CD4-positive, alpha-beta T cell (primary cell): ENCODE measurements at regions of chr14 and their contacts with region 1.

Region 1: GRCh38 chr14:98173305-98173704 is 1098.7 kb downstream of the BCL11B start:
- DNase-seq: peak; percentile 34 to 94 (median 74)
- ATAC-seq: peak; percentile 70
- H3K4me3 ChIP-seq: peak overlapping the region; percentile 33
- H3K4me3 Mint-ChIP-seq: peak overlapping the region; percentile 83
- H3K27ac ChIP-seq: peak overlapping the region; percentile 78 to 80
- H3K27ac Mint-ChIP-seq: peak overlapping the region; percentile 93
- H3K4me1 ChIP-seq: peaks cover 92% of the 10 kb centered on the region
- H3K4me1 Mint-ChIP-seq: peaks cover 100% of the 10 kb centered on the region
- H3K27me3 ChIP-seq: no peaks in the 10 kb centered on the region
- H3K27me3 Mint-ChIP-seq: no peaks in the 10 kb centered on the region
- CTCF ChIP-seq: no peak

Region 2: GRCh38 chr14:97820781-97821180 is 352.5 kb before region 1 on chr14:
- CTCF ChIA-PET with region 1: no interaction called
- POLR2A ChIA-PET with region 1: no interaction called
- intact Hi-C with region 1: no loop called
- DNase-seq: no peak
- ATAC-seq: no peak
- H3K4me3 ChIP-seq: no peak overlapping the region
- H3K4me3 Mint-ChIP-seq: no peak overlapping the region
- H3K27ac ChIP-seq: no peak overlapping the region
- H3K27ac Mint-ChIP-seq: no peak overlapping the region
- H3K4me1 ChIP-seq: no peaks in the 10 kb centered on the region
- H3K4me1 Mint-ChIP-seq: no peaks in the 10 kb centered on the region
- H3K27me3 ChIP-seq: no peaks in the 10 kb centered on the region
- H3K27me3 Mint-ChIP-seq: no peaks in the 10 kb centered on the region
- CTCF ChIP-seq: no peak

Region 3: DNA sequence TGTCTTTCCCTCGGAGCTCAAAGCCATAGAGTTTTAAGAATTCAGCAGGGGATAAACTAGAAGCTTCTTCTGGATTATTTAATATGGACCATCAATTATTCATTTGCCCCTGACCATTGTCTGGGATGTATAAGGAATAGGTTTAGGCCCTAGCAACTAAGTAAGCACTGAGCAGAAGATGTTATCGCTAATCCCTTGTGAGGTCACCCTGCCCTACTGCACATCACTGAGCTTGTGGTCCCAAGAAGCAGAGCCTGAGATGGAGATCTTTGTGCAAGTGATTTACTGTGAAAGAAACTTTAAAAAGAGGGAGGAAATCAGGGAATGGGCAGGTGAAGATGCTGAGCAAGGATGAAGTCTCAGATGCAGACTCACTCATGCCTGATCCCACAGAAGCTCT is 43.6 kb before region 1 on chr14:
- CTCF ChIA-PET with region 1: no interaction called
- POLR2A ChIA-PET with region 1: no interaction called
- intact Hi-C with region 1: no loop called
- DNase-seq: no peak
- ATAC-seq: no peak
- H3K4me3 ChIP-seq: no peak overlapping the region
- H3K4me3 Mint-ChIP-seq: no peak overlapping the region
- H3K27ac ChIP-seq: no peak overlapping the region
- H3K27ac Mint-ChIP-seq: no peak overlapping the region
- H3K4me1 ChIP-seq: peaks cover 3% of the 10 kb centered on the region
- H3K4me1 Mint-ChIP-seq: peaks cover 32% of the 10 kb centered on the region
- H3K27me3 ChIP-seq: no peaks in the 10 kb centered on the region
- H3K27me3 Mint-ChIP-seq: no peaks in the 10 kb centered on the region
- CTCF ChIP-seq: no peak

Region 4: DNA sequence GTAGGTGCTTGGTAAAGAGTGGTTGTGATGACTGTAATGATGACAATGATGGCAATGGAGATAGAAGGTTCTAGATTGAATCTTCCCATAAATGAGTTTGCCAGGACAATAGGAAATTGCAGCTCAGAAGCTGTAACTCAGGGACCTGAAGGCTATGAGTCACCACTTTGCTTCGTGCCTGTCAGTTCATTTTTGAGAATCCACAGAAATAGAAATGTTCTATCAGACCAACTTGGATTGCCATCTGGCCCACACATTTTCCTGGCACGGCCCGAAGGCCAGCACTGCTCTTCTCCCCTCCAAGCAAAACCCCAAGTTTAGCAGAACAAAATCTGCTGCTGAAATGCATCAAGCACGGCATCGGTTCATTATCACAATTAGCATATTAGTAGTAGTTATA is 28.3 kb before region 1 on chr14:
- CTCF ChIA-PET with region 1: interaction called, 4 read pairs
- POLR2A ChIA-PET with region 1: interaction called, 183 read pairs
- intact Hi-C with region 1: loop called (anchors 2 to 5 kb)
- DNase-seq: no peak
- ATAC-seq: no peak
- H3K4me3 ChIP-seq: no peak overlapping the region
- H3K4me3 Mint-ChIP-seq: no peak overlapping the region
- H3K27ac ChIP-seq: no peak overlapping the region
- H3K27ac Mint-ChIP-seq: peak overlapping the region; percentile 43
- H3K4me1 ChIP-seq: peaks cover 25% of the 10 kb centered on the region
- H3K4me1 Mint-ChIP-seq: peaks cover 64% of the 10 kb centered on the region
- H3K27me3 ChIP-seq: no peaks in the 10 kb centered on the region
- H3K27me3 Mint-ChIP-seq: no peaks in the 10 kb centered on the region
- CTCF ChIP-seq: no peak

Region 5: GRCh38 chr14:98161356-98161755 is 11.9 kb before region 1 on chr14:
- CTCF ChIA-PET with region 1: interaction called, 5 read pairs
- POLR2A ChIA-PET with region 1: interaction called, 11 read pairs
- intact Hi-C with region 1: no loop called
- DNase-seq: no peak
- ATAC-seq: no peak
- H3K4me3 ChIP-seq: no peak overlapping the region
- H3K4me3 Mint-ChIP-seq: no peak overlapping the region
- H3K27ac ChIP-seq: no peak overlapping the region
- H3K27ac Mint-ChIP-seq: peak overlapping the region; percentile 15
- H3K4me1 ChIP-seq: peaks cover 19% of the 10 kb centered on the region
- H3K4me1 Mint-ChIP-seq: peaks cover 80% of the 10 kb centered on the region
- H3K27me3 ChIP-seq: no peaks in the 10 kb centered on the region
- H3K27me3 Mint-ChIP-seq: no peaks in the 10 kb centered on the region
- CTCF ChIP-seq: no peak

Region 6: DNA sequence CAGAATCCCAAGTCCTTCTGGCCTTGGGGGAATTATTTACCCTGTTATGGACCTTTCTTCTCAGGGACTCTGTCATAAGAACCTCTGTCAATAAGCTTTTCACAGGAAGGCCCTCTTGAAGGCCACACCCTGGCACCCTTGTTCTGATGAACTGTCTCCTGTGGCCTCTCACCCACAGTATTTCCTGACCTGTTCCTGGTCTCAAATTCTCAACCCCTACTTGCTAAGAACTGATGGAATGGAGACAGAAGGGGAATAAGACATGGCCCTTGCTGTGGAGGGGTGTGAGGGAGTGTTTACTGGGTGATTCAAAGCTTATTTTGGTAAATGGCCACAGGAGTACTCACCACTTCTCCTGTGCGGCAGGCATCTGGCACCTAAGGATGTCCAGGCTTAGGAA is 15.8 kb after region 1 on chr14:
- CTCF ChIA-PET with region 1: interaction called, 11 read pairs
- POLR2A ChIA-PET with region 1: interaction called, 468 read pairs
- intact Hi-C with region 1: loop called (anchors 1 to 2 kb)
- DNase-seq: peak in 5 of 14 experiments; percentile 51 to 85 (median 55)
- ATAC-seq: peak; percentile 31
- H3K4me3 ChIP-seq: peak overlapping the region; percentile 24
- H3K4me3 Mint-ChIP-seq: peak overlapping the region; percentile 80
- H3K27ac ChIP-seq: peak overlapping the region; percentile 76 to 87
- H3K27ac Mint-ChIP-seq: peak overlapping the region; percentile 93
- H3K4me1 ChIP-seq: peaks cover 92% of the 10 kb centered on the region
- H3K4me1 Mint-ChIP-seq: peaks cover 100% of the 10 kb centered on the region
- H3K27me3 ChIP-seq: no peaks in the 10 kb centered on the region
- H3K27me3 Mint-ChIP-seq: no peaks in the 10 kb centered on the region
- CTCF ChIP-seq: no peak

Region 7: DNA sequence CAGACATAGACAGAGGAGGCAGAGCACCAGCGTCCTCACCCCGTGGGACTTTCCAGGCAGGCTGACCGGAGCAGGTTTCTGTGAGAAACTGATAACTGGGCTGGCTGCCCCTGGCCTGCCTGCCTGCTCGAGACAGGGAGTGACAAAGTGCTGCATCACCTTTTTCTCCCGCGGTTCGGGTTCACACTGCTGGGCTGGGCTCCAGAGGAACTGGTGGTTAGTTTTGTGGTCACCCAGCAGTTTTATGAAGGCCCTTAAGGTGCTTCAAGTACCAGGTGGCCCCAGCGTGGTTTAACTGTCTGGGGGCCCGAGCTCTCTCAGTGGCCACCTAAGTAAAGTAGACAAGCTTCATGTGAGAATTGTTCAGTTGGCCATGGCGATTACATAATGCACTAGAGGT is 25.1 kb after region 1 on chr14:
- CTCF ChIA-PET with region 1: no interaction called
- POLR2A ChIA-PET with region 1: interaction called, 468 read pairs
- intact Hi-C with region 1: no loop called
- DNase-seq: peak in 7 of 14 experiments; percentile 35 to 79 (median 61)
- ATAC-seq: peak; percentile 32
- H3K4me3 ChIP-seq: peak overlapping the region; percentile 22
- H3K4me3 Mint-ChIP-seq: peak overlapping the region; percentile 36
- H3K27ac ChIP-seq: peak overlapping the region; percentile 13 to 54
- H3K27ac Mint-ChIP-seq: peak overlapping the region; percentile 93
- H3K4me1 ChIP-seq: peaks cover 72% of the 10 kb centered on the region
- H3K4me1 Mint-ChIP-seq: peaks cover 96% of the 10 kb centered on the region
- H3K27me3 ChIP-seq: no peaks in the 10 kb centered on the region
- H3K27me3 Mint-ChIP-seq: no peaks in the 10 kb centered on the region
- CTCF ChIP-seq: no peak

Region 8: GRCh38 chr14:98219638-98220037 is 46.3 kb after region 1 on chr14:
- CTCF ChIA-PET with region 1: no interaction called
- POLR2A ChIA-PET with region 1: interaction called, 11 read pairs
- intact Hi-C with region 1: no loop called
- DNase-seq: no peak
- ATAC-seq: no peak
- H3K4me3 ChIP-seq: no peak overlapping the region
- H3K4me3 Mint-ChIP-seq: no peak overlapping the region
- H3K27ac ChIP-seq: no peak overlapping the region
- H3K27ac Mint-ChIP-seq: no peak overlapping the region
- H3K4me1 ChIP-seq: peaks cover 44% of the 10 kb centered on the region
- H3K4me1 Mint-ChIP-seq: peaks cover 27% of the 10 kb centered on the region
- H3K27me3 ChIP-seq: no peaks in the 10 kb centered on the region
- H3K27me3 Mint-ChIP-seq: no peaks in the 10 kb centered on the region
- CTCF ChIP-seq: no peak

Region 9: GRCh38 chr14:99215277-99215676 is 1042.0 kb after region 1 on chr14:
- CTCF ChIA-PET with region 1: no interaction called
- POLR2A ChIA-PET with region 1: interaction called, 10 read pairs
- intact Hi-C with region 1: no loop called
- DNase-seq: no peak
- ATAC-seq: no peak
- H3K4me3 ChIP-seq: peak overlapping the region; percentile 39
- H3K4me3 Mint-ChIP-seq: peak overlapping the region; percentile 84
- H3K27ac ChIP-seq: peak overlapping the region; percentile 25 to 71
- H3K27ac Mint-ChIP-seq: peak overlapping the region; percentile 95
- H3K4me1 ChIP-seq: peaks cover 99% of the 10 kb centered on the region
- H3K4me1 Mint-ChIP-seq: peaks cover 99% of the 10 kb centered on the region
- H3K27me3 ChIP-seq: no peaks in the 10 kb centered on the region
- H3K27me3 Mint-ChIP-seq: no peaks in the 10 kb centered on the region
- CTCF ChIP-seq: no peak